Left lung (tissue), 14 donors: ENCODE measurements at regions of chr2 and their contacts with region 1.

Region 1: GRCh38 chr2:222318026-222318711 is 19.4 kb upstream of the PAX3 start:
- DNase-seq: peak; percentile 67 to 93 (median 72)
- ATAC-seq: peak; percentile 94
- H3K4me3 ChIP-seq: peak overlapping the region; percentile 16 to 49
- H3K27ac ChIP-seq: no peak overlapping the region
- H3K4me1 ChIP-seq: peaks cover 4 to 27% of the 10 kb centered on the region in 2 donors
- H3K27me3 ChIP-seq: peaks cover 57 to 97% of the 10 kb centered on the region in 2 donors
- CTCF ChIP-seq: peak in 1 of 2 donors; percentile 32

Region 2: GRCh38 chr2:222160944-222161343 is 157.2 kb before region 1 on chr2:
- intact Hi-C with region 1: no loop called
- DNase-seq: no peak
- ATAC-seq: no peak
- H3K4me3 ChIP-seq: no peak overlapping the region
- H3K27ac ChIP-seq: no peak overlapping the region
- H3K4me1 ChIP-seq: no peaks in the 10 kb centered on the region
- H3K27me3 ChIP-seq: no peaks in the 10 kb centered on the region
- CTCF ChIP-seq: no peak

Region 3: DNA sequence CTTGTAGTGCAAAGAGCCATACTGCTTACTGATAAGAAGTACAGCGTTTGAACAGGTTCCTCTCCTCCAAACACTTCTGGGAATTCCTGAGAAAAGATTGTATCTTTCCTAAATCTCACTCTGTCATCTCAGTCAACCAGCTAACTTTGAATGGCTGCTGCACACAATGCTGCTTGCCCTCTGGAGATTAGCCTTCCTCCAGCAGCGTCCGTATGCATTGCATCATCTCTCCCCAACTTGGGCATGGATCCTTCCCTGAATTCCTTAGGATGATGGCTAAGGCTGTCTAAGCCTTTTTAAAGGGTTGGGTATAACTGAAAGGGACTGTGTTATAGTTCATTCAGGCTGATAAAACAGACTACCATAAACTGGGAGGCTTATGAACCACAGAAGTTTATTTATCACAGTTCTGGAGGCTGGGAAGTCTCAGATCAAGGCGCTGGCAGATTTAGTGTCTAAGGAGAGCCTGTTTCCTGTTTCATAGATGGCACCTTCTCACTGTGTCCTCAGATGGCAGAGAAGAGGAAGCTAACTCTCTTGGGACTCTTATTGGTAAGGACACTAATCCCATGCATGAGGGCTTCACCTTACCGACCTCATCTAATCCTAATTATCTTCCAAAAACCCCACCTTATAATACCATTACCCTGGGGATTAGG is 124.7 kb before region 1 on chr2:
- intact Hi-C with region 1: no loop called
- DNase-seq: no peak
- ATAC-seq: no peak
- H3K4me3 ChIP-seq: no peak overlapping the region
- H3K27ac ChIP-seq: no peak overlapping the region
- H3K4me1 ChIP-seq: no peaks in the 10 kb centered on the region
- H3K27me3 ChIP-seq: no peaks in the 10 kb centered on the region
- CTCF ChIP-seq: no peak

Region 4: GRCh38 chr2:222561817-222562645 is 243.9 kb after region 1 on chr2:
- intact Hi-C with region 1: loop called in 1 of 2 experiments (anchors 10 kb)
- DNase-seq: peak in 2 of 4 donors; percentile 69 to 81
- ATAC-seq: peak; percentile 85
- H3K4me3 ChIP-seq: no peak overlapping the region
- H3K27ac ChIP-seq: no peak overlapping the region
- H3K4me1 ChIP-seq: no peaks in the 10 kb centered on the region
- H3K27me3 ChIP-seq: no peaks in the 10 kb centered on the region
- CTCF ChIP-seq: peak; percentile 31 to 44